ENCODE measurements at regions of chr17 and their contacts with region 1.

Region 1: GRCh38 chr17:75679706-75680442 is 12.7 kb downstream of the SAP30BP start:
- DNase-seq: peak in 3 of 7 donors; percentile 23 to 70 (median 47)
- H3K4me3 ChIP-seq: no peak overlapping the region
- H3K27ac ChIP-seq: peak overlapping the region in 2 of 5 donors; percentile 17 to 34
- H3K4me1 ChIP-seq: peaks cover 0 to 17% of the 10 kb centered on the region in 2 donors
- H3K27me3 ChIP-seq: no peaks in the 10 kb centered on the region
- CTCF ChIP-seq: peak in 3 of 6 experiments; percentile 14 to 42 (median 27)
- POLR2A ChIP-seq: no peak

Region 2: GRCh38 chr17:75589012-75589918 is 90.6 kb before region 1 on chr17:
- intact Hi-C with region 1: no loop called
- DNase-seq: peak; percentile 92 to 96 (median 95)
- H3K4me3 ChIP-seq: peak overlapping the region in 2 of 4 donors; percentile 30 to 78
- H3K27ac ChIP-seq: peak overlapping the region in 4 of 5 donors; percentile 78 to 95 (median 85)
- H3K4me1 ChIP-seq: peaks cover 0 to 10% of the 10 kb centered on the region in 2 donors
- H3K27me3 ChIP-seq: no peaks in the 10 kb centered on the region
- CTCF ChIP-seq: peak in 4 of 6 experiments; percentile 46 to 87 (median 72)
- POLR2A ChIP-seq: peak; percentile 53 to 55

Region 3: GRCh38 chr17:75738218-75738802 is 58.4 kb after region 1 on chr17:
- intact Hi-C with region 1: loop called in 1 of 2 experiments (anchors 5 kb)
- DNase-seq: peak in 2 of 7 donors; percentile 63 to 66
- H3K4me3 ChIP-seq: no peak overlapping the region
- H3K27ac ChIP-seq: no peak overlapping the region
- H3K4me1 ChIP-seq: no peaks in the 10 kb centered on the region
- H3K27me3 ChIP-seq: no peaks in the 10 kb centered on the region
- CTCF ChIP-seq: no peak
- POLR2A ChIP-seq: no peak

Region 4: GRCh38 chr17:75749545-75750389 is 69.9 kb after region 1 on chr17:
- intact Hi-C with region 1: loop called in 1 of 2 experiments (anchors 2 kb)
- DNase-seq: peak; percentile 81 to 96 (median 91)
- H3K4me3 ChIP-seq: no peak overlapping the region
- H3K27ac ChIP-seq: peak overlapping the region in 1 of 5 donors; percentile 23
- H3K4me1 ChIP-seq: peaks cover 11 to 19% of the 10 kb centered on the region in 2 donors
- H3K27me3 ChIP-seq: no peaks in the 10 kb centered on the region
- CTCF ChIP-seq: peak; percentile 83 to 97 (median 93)
- POLR2A ChIP-seq: no peak